Natural killer cell (primary cell): ENCODE measurements at regions of chr2 and their contacts with region 1.

Region 1: DNA sequence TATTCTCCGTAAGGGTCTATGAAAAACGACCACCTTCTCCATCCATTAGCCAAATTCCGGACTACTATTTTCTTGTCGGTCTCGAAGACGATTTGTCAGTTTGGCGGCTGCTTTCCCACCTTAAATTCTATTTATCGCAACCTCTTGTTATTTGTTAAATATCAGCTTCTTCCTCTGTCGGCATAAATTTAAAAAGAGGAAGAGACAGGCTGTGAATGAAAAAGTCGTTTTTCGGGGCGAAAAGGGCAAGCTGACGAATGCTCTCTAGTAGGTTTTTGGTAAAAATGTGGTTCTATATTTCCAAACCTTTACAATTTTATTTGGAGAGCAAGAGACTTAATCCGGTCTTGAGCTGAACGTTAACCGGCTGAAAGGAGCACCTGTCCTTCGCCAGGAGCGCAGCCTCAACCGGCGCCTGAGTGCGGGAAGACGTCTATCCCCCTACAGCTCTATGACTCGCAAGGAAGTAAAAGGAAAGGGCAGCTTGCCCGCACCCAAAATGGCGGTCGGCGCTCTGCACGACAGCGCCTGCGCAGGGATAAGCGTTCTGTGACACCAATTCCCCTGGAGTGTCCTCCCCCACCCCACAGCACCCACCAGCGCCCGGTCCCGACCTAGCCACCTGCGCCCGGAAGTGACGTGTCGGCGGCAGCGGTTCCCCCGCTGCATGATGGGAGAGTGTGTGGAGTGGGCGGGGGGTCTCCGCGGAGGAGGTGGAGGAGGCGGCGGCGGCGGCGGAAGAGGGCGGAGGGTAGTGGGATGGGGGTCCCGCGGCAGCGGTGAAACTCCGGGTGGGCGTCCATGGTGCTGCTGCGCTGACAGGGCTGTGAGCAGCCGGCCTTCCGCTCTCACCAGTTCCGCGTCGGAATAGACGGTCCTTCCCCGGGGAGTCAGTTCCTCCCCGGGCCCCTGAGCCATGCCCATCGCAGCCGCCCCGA is at the start of gene AFTPH:
- DNase-seq: peak; percentile 98 to 100
- ATAC-seq: peak; percentile 90 to 99 (median 95)
- H3K4me3 ChIP-seq: peak within 1 kb of the TSS; percentile 74
- H3K4me3 Mint-ChIP-seq: peak within 1 kb of the TSS; percentile 98
- H3K27ac ChIP-seq: peak within 1 kb of the TSS; percentile 86
- H3K27ac Mint-ChIP-seq: peak within 1 kb of the TSS; percentile 96 to 98
- H3K4me1 ChIP-seq: peaks cover 11% of the 10 kb centered on the region
- H3K4me1 Mint-ChIP-seq: peaks cover 28 to 42% of the 10 kb centered on the region in 2 donors
- H3K27me3 ChIP-seq: no peaks in the 10 kb centered on the region
- H3K27me3 Mint-ChIP-seq: no peaks in the 10 kb centered on the region
- CTCF ChIP-seq: no peak
- total RNA-seq, gene AFTPH: 28.9 to 39.6 (median 39.5) TPM

Region 2: GRCh38 chr2:64488050-64488974 is 35.6 kb before region 1 on chr2:
- intact Hi-C with region 1: no loop called
- DNase-seq: peak; percentile 68 to 88
- ATAC-seq: peak; percentile 79 to 93 (median 91)
- H3K4me3 ChIP-seq: no peak overlapping the region
- H3K4me3 Mint-ChIP-seq: no peak overlapping the region
- H3K27ac ChIP-seq: no peak overlapping the region
- H3K27ac Mint-ChIP-seq: no peak overlapping the region
- H3K4me1 ChIP-seq: peaks cover 7% of the 10 kb centered on the region
- H3K4me1 Mint-ChIP-seq: peaks cover 0 to 5% of the 10 kb centered on the region in 2 donors
- H3K27me3 ChIP-seq: no peaks in the 10 kb centered on the region
- H3K27me3 Mint-ChIP-seq: peaks cover under 1 to 15% of the 10 kb centered on the region in 2 donors
- CTCF ChIP-seq: peak; percentile 96

Region 3: DNA sequence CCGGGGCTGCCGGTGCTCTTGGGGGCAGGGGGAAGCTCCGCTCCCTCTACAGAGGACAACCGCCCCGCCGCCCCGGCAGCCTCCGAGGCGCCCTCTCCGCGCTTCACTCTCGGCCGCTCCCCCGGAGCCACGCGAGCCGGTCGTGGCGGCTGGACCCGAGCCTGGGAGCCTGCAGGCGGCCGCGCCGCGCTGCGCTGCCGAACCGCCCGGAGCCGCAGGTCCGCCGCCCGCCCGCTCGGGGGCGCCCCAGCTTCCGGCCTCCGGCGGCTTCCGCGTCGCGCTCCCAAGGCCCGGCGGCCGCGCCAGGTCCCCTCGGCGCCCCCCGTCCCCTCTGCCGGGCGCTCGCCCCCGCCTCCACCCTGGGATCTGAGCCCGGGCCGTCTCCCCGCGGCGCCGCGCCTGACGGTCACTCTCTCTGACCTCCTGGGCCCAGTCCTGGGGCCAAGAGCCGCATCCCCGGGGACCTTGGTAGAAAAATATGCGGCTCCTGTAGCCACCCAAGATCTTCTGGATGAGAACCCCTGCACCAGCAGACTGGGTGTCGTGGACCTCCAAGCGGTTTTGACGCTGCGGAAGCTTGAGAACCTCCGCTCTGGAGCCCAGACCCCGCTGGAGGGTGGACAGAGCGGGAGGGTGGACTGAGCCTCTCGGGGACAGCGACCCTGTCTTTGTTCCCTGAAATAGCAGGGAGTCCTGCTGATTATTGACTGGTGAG is 85.4 kb after region 1 on chr2:
- intact Hi-C with region 1: loop called (anchors 2 kb)
- DNase-seq: peak; percentile 80 to 86
- ATAC-seq: peak; percentile 75 to 86 (median 77)
- H3K4me3 ChIP-seq: peak overlapping the region; percentile 60
- H3K4me3 Mint-ChIP-seq: peak overlapping the region; percentile 85
- H3K27ac ChIP-seq: peak overlapping the region; percentile 69
- H3K27ac Mint-ChIP-seq: peak overlapping the region; percentile 77 to 89
- H3K4me1 ChIP-seq: peaks cover 35% of the 10 kb centered on the region
- H3K4me1 Mint-ChIP-seq: peaks cover 19 to 28% of the 10 kb centered on the region in 2 donors
- H3K27me3 ChIP-seq: no peaks in the 10 kb centered on the region
- H3K27me3 Mint-ChIP-seq: no peaks in the 10 kb centered on the region
- CTCF ChIP-seq: peak; percentile 34

Region 4: DNA sequence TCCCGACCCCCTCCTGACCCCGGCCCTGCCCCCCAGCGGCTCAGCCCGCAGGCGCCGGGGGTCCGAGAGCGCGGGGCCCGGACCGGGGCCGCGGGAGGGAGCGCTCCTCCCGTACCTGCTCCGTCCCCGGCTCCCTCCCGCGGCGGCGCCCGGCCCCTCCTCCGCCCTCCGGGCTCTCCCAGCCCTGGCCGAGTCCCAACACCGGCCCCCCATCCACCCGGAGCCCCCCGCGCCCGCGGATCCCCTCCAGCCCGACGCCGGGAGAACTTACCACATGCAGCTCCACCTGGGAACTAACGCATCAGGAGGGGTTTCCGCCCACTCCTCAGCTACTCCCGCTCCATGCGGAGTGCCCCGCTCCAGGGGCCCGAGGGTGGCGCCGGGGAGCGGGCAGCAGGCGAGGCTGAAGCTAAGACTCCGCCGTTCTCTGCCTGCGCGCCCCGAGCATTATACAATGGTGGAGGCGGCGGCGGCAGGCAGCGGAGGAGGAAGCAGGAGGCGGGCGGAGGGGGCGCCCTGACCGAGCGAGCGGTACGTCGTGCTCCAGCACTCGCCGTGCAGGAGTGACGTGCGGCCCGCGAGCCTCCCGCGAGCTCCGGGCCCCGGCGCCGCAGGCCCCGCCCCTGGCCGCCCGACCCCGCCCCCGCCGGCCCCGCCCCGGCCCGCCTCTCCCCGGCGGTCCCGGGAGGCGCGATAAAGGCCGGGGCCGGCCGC is 129.6 kb after region 1 on chr2 and contains the start of gene SERTAD2:
- intact Hi-C with region 1: loop called (anchors 2 kb)
- DNase-seq: peak; percentile 80 to 94
- ATAC-seq: peak; percentile 81 to 93 (median 87)
- H3K4me3 ChIP-seq: peak within 1 kb of the TSS; percentile 99
- H3K4me3 Mint-ChIP-seq: peak within 1 kb of the TSS; percentile 93
- H3K27ac ChIP-seq: peak within 1 kb of the TSS; percentile 98
- H3K27ac Mint-ChIP-seq: peak within 1 kb of the TSS; percentile 85 to 87
- H3K4me1 ChIP-seq: peaks cover 28% of the 10 kb centered on the region
- H3K4me1 Mint-ChIP-seq: peaks cover 34 to 40% of the 10 kb centered on the region in 2 donors
- H3K27me3 ChIP-seq: no peaks in the 10 kb centered on the region
- H3K27me3 Mint-ChIP-seq: no peaks in the 10 kb centered on the region
- CTCF ChIP-seq: no peak
- total RNA-seq, gene SERTAD2: 45.6 to 71.2 (median 55.8) TPM

Region 5: DNA sequence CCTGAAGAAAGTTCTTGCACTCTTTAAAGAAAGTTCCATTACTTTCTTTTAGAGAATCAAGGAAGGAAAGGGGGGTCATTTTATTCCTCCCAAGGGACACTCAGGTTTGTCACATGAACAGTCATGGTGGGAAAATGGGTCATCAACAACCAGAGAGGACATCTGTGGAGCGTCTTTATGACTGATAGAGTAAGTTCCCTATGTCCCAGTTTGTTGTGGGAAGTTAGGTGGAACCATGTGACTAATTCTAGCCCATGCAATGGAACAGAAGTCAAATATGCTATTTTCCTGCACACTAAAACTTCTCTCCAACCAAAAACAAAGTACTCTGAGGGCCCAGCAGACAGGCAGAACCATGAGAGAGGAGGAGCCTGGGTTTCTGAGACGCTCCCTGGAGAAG is 295.4 kb after region 1 on chr2:
- intact Hi-C with region 1: no loop called
- DNase-seq: peak in 1 of 2 donors; percentile 9
- ATAC-seq: no peak
- H3K4me3 ChIP-seq: peak overlapping the region; percentile 5
- H3K4me3 Mint-ChIP-seq: peak overlapping the region; percentile 60
- H3K27ac ChIP-seq: peak overlapping the region; percentile 89
- H3K27ac Mint-ChIP-seq: peak overlapping the region; percentile 88 to 91
- H3K4me1 ChIP-seq: peaks cover 13% of the 10 kb centered on the region
- H3K4me1 Mint-ChIP-seq: peaks cover 19 to 21% of the 10 kb centered on the region in 2 donors
- H3K27me3 ChIP-seq: no peaks in the 10 kb centered on the region
- H3K27me3 Mint-ChIP-seq: no peaks in the 10 kb centered on the region
- CTCF ChIP-seq: no peak

Region 6: GRCh38 chr2:64865073-64865830 is 341.3 kb after region 1 on chr2:
- intact Hi-C with region 1: loop called (anchors 1 kb)
- DNase-seq: peak; percentile 64 to 83
- ATAC-seq: peak; percentile 84 to 88 (median 88)
- H3K4me3 ChIP-seq: peak overlapping the region; percentile 53
- H3K4me3 Mint-ChIP-seq: no peak overlapping the region
- H3K27ac ChIP-seq: peak overlapping the region; percentile 50
- H3K27ac Mint-ChIP-seq: no peak overlapping the region
- H3K4me1 ChIP-seq: peaks cover 38% of the 10 kb centered on the region
- H3K4me1 Mint-ChIP-seq: no peaks in the 10 kb centered on the region
- H3K27me3 ChIP-seq: peaks cover 3% of the 10 kb centered on the region
- H3K27me3 Mint-ChIP-seq: peaks cover 4 to 9% of the 10 kb centered on the region in 2 donors
- CTCF ChIP-seq: peak; percentile 94

Region 7: GRCh38 chr2:65040400-65041261 is 516.7 kb after region 1 on chr2:
- intact Hi-C with region 1: loop called (anchors 10 kb)
- DNase-seq: peak; percentile 67 to 90
- ATAC-seq: peak; percentile 94 to 100 (median 100)
- H3K4me3 ChIP-seq: no peak overlapping the region
- H3K4me3 Mint-ChIP-seq: no peak overlapping the region
- H3K27ac ChIP-seq: no peak overlapping the region
- H3K27ac Mint-ChIP-seq: no peak overlapping the region
- H3K4me1 ChIP-seq: peaks cover 4% of the 10 kb centered on the region
- H3K4me1 Mint-ChIP-seq: peaks cover 12 to 15% of the 10 kb centered on the region in 2 donors
- H3K27me3 ChIP-seq: no peaks in the 10 kb centered on the region
- H3K27me3 Mint-ChIP-seq: no peaks in the 10 kb centered on the region
- CTCF ChIP-seq: peak; percentile 95